ENCODE measurements at regions of chr10 and their contacts with region 1.

Region 1: GRCh38 chr10:78302989-78303854 is 269.6 kb downstream of the RPS24 start:
- DNase-seq: peak; percentile 98
- ATAC-seq: peak; percentile 94
- H3K4me3 Mint-ChIP-seq: peak overlapping the region; percentile 79
- H3K27ac Mint-ChIP-seq: peak overlapping the region; percentile 90
- H3K4me1 Mint-ChIP-seq: peaks cover 12% of the 10 kb centered on the region
- H3K27me3 Mint-ChIP-seq: no peaks in the 10 kb centered on the region

Region 2: DNA sequence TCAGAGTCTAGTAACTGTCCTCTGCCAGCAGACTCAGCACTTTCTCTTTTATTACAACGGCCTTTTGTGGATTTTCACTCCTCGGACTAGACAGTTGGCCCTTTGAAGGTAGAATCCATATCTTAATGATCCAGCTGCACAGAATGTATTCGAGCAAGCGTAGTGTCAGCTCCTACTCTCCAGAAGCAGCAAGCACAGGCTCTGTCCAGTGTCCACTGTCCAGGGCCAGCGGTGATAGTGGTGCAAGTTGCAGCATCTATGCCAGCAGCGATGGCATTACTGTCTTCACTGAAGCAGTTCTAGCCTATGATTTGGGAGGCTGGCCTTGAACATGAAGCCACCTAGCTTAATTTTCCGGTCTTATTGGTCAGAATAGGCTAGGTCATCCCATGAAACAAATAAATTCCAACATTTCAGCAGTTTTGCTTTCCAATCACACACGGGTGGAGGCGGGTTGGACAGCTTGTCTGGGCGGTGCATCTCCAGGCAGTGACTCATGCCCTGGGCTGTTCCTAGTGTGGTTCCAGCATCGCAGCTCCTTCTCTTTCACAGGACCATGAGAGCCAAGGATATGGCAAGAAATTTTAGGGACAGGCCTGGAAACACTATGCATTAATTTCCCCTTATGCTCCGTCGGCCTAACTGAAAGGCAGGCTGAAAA is 557.0 kb before region 1 on chr10:
- CTCF ChIA-PET with region 1: no interaction called
- POLR2A ChIA-PET with region 1: no interaction called
- intact Hi-C with region 1: no loop called
- DNase-seq: no peak
- ATAC-seq: no peak
- H3K4me3 Mint-ChIP-seq: no peak overlapping the region
- H3K27ac Mint-ChIP-seq: no peak overlapping the region
- H3K4me1 Mint-ChIP-seq: no peaks in the 10 kb centered on the region
- H3K27me3 Mint-ChIP-seq: no peaks in the 10 kb centered on the region

Region 3: DNA sequence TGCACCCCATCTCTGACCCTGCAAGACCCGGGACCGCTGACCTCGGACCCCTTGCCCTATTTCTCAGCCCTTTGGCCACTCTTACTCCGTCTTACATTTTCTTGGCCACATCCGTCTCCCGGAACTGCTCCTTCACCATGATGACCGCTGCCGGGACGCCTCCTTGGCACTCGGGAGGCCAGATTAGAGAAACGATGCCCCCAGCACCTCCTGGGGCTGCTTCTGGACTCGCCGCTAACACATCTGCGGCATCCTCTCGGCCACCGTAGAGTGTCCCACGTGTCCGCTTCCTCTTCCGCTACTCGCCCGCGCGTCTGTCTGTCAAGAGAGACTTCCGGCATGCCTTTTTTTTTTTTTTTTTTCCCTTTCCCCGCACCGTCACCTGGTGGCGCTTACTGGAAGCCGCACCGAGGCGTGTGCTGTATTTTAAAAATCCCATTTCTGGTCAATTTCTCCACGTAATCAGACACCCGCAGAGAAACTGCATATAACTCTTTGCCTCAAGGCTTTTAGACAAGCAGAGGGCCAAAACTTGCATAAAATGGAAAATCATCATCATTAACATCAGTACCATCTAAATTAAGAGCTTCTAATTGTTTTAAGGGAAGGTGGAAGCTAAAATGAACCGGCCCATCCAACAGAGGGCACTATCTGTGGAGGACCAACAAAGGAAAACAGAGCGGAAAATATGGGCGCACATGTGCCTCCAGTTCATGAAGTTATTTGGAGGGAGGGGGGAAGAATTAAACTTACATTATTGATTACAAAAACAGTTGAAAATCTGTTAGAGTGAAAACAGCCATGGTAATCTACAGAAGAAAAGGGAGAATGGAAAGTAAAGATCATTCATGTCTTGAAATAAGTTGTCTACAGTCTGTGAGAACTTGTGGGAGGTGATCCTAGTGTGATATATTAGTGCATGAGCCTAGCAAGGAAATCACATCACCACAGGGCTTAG is 273.7 kb before region 1 on chr10 and contains the start of gene POLR3A:
- CTCF ChIA-PET with region 1: no interaction called
- POLR2A ChIA-PET with region 1: no interaction called
- intact Hi-C with region 1: loop called (anchors 1 kb)
- DNase-seq: peak; percentile 96
- ATAC-seq: peak; percentile 65
- H3K4me3 Mint-ChIP-seq: peak within 1 kb of the TSS; percentile 99
- H3K27ac Mint-ChIP-seq: peak within 1 kb of the TSS; percentile 98
- H3K4me1 Mint-ChIP-seq: peaks cover 34% of the 10 kb centered on the region
- H3K27me3 Mint-ChIP-seq: no peaks in the 10 kb centered on the region
- total RNA-seq, gene POLR3A: 18.3 to 19.3 TPM

Region 4: DNA sequence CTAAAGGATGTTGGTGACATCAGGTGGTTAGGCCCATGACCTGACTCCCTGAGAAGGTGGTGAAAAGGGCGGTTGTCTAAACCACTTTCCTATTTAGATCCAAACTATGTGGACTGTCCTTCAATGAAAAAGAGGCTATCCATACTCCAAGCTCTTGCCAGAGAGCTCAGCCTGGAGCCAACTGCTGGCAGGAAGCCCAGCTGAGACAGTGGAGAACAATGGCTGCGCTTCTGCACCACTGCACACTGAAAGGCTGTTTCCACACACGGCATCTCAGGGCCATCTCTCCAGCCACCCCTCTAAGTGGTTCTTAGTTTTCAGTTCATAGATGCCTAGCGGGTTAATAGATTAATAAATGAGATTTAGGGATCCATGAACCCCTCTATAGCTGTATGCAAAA is 276.8 kb after region 1 on chr10:
- CTCF ChIA-PET with region 1: no interaction called
- POLR2A ChIA-PET with region 1: no interaction called
- intact Hi-C with region 1: loop called in 1 of 2 experiments (anchors 1 kb)
- DNase-seq: no peak
- ATAC-seq: no peak
- H3K4me3 Mint-ChIP-seq: no peak overlapping the region
- H3K27ac Mint-ChIP-seq: peak overlapping the region; percentile 83
- H3K4me1 Mint-ChIP-seq: peaks cover 17% of the 10 kb centered on the region
- H3K27me3 Mint-ChIP-seq: no peaks in the 10 kb centered on the region

Region 5: DNA sequence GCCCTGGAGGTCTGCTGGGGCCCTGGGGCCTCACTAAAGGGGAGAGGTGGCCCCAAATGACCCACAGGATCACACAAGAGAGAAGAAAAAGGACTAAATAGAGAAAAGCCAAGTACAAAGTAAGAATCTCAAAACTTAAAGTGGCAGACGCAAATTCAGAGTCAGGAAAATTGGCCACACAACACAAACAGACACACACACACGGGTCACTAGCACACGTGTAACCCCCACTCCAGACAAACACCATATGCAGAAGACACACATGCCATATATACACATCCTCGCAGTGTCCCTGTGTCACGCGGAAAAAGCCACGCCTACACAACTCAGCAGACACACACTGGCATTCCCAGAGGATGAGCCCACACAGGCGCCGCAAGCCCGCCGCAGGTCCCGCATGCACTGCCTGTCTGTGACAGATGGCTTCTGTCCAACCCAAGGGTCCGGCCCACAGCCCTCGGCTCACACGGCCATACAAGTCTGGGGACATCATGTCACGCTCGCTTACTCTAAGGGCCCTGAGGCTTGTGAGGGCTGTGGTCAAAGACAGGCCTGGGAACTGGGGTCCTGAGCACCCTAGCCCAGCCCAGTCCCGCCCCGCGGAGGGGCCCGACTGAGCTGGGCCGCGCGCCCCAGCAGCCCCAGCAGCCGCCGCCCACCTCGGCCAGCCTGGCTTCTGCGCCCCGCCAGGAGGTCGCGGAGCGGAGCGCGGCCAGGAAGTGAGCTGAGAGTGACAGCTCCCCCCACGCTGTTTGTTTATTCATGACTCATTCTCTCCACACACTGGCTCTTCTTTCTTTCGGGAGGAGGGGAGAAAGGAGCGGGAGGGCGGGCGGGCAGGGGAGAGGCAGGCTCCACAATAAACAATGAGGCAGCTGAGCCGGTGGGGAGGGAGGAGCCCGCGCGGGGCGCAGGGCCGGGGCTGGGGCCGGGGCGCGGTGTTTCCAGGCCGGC is 670.0 kb after region 1 on chr10:
- CTCF ChIA-PET with region 1: no interaction called
- POLR2A ChIA-PET with region 1: no interaction called
- intact Hi-C with region 1: loop called in 1 of 2 experiments (anchors 1 kb)
- DNase-seq: peak; percentile 86
- ATAC-seq: peak; percentile 63
- H3K4me3 Mint-ChIP-seq: peak overlapping the region; percentile 58
- H3K27ac Mint-ChIP-seq: peak overlapping the region; percentile 77
- H3K4me1 Mint-ChIP-seq: peaks cover 32% of the 10 kb centered on the region
- H3K27me3 Mint-ChIP-seq: peaks cover 2% of the 10 kb centered on the region

Region 6: DNA sequence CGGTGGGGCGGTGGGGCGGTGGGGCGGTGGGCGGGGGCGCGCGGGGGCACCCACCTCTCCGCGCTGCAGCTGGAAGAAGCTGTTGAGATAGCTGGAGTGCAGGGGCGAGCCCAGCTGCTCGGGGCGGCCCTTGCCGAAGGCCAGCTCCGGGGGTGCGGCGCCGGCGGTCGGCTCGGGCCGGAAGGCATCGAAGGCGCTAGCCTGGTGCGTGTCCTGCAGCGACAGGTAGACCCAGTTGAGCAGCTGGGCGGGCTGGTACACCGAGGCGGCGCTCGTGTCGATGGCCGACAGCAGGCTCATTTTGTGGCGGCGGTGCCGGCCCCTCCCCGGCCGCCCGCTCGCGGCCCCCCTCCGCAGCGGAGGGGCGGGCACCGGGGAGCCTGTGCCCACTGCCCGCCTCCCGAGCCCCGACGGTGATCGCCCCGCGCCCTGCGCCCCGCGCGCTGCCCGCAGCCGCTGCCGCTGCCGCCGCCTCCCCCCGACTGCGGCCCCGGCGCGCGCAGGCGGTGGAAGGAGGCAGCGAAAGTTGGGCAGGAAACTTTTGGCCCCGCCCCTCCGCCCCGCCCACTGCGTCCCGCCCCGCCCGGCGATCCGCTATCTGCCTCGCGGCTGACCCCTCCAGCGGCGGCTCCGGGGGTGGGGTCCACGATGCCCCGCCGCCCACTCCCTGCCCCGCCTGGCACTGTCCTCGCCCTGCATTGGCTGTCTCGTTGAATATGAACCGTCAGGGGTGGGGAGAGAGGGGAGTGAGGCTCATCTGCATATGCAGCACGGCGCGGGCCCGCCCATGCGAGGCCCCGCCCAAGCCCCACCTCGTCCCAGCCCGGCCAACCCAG is 1142.1 kb after region 1 on chr10 and contains the start of gene ZCCHC24:
- CTCF ChIA-PET with region 1: no interaction called
- POLR2A ChIA-PET with region 1: no interaction called
- intact Hi-C with region 1: loop called in 1 of 2 experiments (anchors 5 kb)
- DNase-seq: peak; percentile 93
- ATAC-seq: peak; percentile 97
- H3K4me3 Mint-ChIP-seq: peak within 1 kb of the TSS; percentile 65
- H3K27ac Mint-ChIP-seq: no peak within 1 kb of the TSS
- H3K4me1 Mint-ChIP-seq: peaks cover 16% of the 10 kb centered on the region
- H3K27me3 Mint-ChIP-seq: peaks cover 7% of the 10 kb centered on the region
- total RNA-seq, gene ZCCHC24: 0.53 to 0.75 TPM

Measured in activated CD4-positive, alpha-beta T cell treated with anti-CD3 and anti-CD28 coated beads for 36 hours (primary cell).